AG04449 (cell line): ENCODE measurements at regions of chr15 and their contacts with region 1.

Region 1: GRCh38 chr15:41811432-41812195 is 16.3 kb upstream of the JMJD7 start:
- DNase-seq: peak; percentile 24
- H3K4me3 ChIP-seq: no peak overlapping the region
- CTCF ChIP-seq: peak; percentile 92

Region 2: DNA sequence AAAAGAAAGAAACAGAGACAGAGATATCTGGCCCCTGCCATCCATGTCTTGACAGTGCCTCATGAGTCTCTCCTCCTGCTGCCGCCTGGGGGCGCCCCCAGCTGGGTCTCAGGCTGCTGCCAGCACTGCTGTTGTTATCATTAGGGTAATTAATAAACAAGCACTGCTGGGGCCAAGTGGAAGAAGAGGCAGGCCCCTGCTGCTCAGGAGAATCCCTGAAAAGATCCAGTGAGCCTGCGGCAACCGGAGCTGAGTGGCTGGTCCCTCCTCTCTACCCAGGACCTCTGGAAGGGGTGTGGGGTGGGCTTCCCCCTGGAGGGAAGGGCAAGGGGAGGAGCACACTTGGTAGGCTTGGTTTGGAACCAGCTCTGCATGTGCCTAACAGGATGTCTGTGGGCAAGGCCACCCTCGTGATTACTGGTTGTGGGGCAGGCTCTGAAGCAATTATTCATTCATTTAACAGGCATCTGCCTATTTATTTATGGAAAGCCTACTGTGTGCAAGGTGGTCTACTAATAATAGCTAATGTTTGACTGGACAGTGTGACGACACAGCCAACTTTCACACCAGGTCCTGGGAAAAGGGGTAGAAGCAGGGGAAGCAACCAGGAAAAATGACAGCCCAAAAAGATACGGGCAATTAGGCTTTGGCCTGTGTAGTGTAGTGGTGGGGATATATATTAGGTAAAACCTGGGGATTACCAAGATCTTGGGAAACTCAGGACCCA is 253.8 kb before region 1 on chr15:
- CTCF ChIA-PET with region 1: interaction called, 12 read pairs
- POLR2A ChIA-PET with region 1: no interaction called
- DNase-seq: no peak
- H3K4me3 ChIP-seq: peak overlapping the region; percentile 54
- CTCF ChIP-seq: peak; percentile 84

Region 3: GRCh38 chr15:41746802-41747201 is 64.8 kb before region 1 on chr15:
- CTCF ChIA-PET with region 1: interaction called, 21 read pairs
- POLR2A ChIA-PET with region 1: no interaction called
- DNase-seq: no peak
- H3K4me3 ChIP-seq: no peak overlapping the region
- CTCF ChIP-seq: no peak

Region 4: DNA sequence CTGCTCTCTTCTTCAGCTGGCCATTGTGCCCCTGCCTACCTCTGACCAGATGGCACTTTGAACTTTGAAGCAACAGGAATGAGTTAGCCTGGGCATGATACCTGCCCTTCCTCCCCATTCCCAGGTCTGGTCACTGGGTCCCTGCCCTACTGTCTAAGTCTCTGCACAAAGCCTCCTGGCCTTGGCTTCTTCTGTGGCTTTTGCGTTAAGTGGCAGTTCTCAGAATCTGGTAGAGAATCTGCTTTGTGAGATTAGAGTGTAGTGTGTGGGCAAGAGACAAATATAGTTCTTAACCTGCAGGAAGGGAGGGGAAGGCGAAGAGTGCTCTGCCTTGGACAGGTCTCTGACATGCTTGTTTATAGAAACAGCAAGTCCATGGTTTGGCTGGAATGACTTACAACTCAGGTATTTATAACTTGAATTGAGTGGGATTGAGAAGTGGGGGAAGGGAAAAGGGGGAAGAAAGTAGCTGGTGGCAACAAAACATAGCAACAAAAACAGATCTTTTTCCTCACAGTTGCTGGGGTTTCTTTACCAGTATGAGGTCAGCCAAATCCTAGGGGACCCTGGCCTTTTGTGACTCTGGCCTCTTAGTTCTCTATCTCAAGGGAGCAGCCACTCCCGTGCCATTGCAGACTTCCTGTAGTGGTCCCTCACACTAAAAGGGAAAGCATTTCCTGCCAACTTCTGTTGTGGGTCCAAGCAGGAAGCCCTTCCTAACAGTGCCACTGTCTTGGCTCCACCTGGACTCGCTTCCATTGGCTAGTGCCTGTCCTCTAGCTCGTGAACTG is 20.7 kb before region 1 on chr15:
- CTCF ChIA-PET with region 1: interaction called, 102 read pairs
- POLR2A ChIA-PET with region 1: no interaction called
- DNase-seq: no peak
- H3K4me3 ChIP-seq: no peak overlapping the region
- CTCF ChIP-seq: no peak

Region 5: DNA sequence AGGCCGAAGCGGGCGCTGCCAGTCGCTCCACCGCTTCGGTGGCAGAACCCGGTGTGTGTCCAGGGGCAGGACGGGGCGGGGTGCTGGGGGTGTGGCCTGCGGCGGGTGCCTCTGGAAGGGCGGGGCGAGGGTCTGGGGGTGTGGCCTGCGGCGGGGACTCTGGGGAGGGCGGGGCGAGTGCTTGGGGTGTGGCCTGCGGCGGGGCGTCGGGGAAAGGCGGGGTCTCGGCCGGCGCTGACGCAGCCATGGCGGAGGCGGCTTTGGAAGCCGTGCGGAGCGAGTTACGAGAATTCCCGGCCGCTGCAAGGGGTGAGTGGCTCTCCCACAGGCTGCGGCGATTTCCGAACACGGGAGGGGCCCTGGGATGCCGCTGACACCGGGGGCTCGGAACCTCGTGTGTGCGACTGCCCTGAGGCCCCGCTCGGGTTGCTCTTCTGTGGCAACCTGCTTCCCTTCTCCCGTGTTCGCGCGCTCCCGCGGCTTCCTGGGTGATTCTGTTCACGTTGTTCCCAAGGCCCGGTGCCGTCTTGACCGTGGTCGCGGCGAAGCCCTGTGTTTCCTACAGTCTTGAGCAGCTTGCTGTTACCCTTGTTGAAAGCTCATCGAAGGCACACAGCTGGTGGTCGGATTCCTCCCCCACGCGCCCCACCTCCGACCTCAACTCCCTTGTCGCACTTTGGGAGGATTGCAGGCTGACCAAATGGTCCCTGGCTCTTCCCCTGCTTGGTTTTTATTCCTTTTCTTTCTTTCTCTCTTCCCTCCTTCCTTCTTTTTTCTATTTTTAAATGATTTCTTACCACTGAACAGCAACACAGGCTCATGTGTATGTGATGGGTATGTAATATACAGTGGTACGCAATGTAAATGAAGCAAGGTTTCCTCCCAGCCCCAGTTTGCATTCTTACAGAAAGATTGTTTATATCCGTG is 16.5 kb after region 1 on chr15 and contains the start of gene JMJD7:
- CTCF ChIA-PET with region 1: interaction called, 98 read pairs
- POLR2A ChIA-PET with region 1: no interaction called
- DNase-seq: peak; percentile 17
- H3K4me3 ChIP-seq: peak within 1 kb of the TSS; percentile 93
- CTCF ChIP-seq: no peak